ENCODE measurements at regions of chr5 and their contacts with region 1.

Region 1: GRCh38 chr5:179559284-179560252 is 9.2 kb downstream of the RUFY1 start:
- DNase-seq: peak; percentile 96 to 98
- H3K4me3 ChIP-seq: peak overlapping the region; percentile 91
- H3K27ac ChIP-seq: peak overlapping the region; percentile 78
- H3K4me1 ChIP-seq: peaks cover 9% of the 10 kb centered on the region; the same call in 1 of the 2 replicates
- H3K27me3 ChIP-seq: no peaks in the 10 kb centered on the region
- CTCF ChIP-seq: no peak

Region 2: DNA sequence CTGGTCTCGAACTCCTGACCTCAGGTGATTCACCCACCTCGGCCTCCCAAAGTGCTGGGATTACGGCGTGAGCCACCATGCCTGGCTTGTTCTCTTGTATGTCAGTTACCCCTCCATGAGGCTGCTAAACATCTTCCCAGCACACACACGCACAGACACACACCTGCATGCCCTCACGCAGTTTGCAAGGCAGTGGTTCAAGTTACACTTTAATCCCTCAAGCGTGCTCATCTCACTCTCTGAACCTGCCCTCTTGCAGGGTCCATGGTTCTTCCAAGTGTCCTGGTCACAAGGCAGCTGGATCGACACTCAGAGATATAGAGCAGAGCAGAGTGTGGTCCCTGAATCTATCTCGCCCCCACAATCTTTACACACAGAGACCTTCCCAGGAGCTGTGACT is 43.3 kb before region 1 on chr5:
- CTCF ChIA-PET with region 1: no interaction called
- POLR2A ChIA-PET with region 1: no interaction called
- intact Hi-C with region 1: loop called (anchors 2 kb)
- DNase-seq: no peak
- H3K4me3 ChIP-seq: no peak overlapping the region
- H3K27ac ChIP-seq: no peak overlapping the region
- H3K4me1 ChIP-seq: no peaks in the 10 kb centered on the region
- H3K27me3 ChIP-seq: peaks cover 39% of the 10 kb centered on the region
- CTCF ChIP-seq: no peak

Region 3: DNA sequence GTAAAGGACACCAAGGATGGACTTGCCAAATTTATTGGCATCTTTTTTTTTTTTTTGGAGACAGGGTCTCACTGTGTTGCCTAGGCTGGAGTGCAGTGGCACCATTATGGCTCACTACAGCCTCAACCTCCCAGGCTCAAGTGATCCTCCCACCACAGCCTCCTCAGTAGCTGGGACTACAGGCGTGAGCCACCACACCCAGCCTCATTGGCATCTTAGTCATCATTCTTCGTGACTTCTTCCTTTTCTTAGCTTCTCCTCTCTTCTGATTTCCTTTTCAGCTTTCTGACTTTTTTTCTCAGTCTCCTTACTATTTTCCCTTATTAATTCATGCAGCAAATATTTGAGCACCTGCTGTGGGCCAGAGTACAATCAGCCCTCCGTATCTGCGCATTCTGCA is 179.2 kb after region 1 on chr5:
- CTCF ChIA-PET with region 1: interaction called, 21 read pairs
- POLR2A ChIA-PET with region 1: no interaction called
- intact Hi-C with region 1: no loop called
- DNase-seq: no peak
- H3K4me3 ChIP-seq: no peak overlapping the region
- H3K27ac ChIP-seq: no peak overlapping the region
- H3K4me1 ChIP-seq: peaks cover 11% of the 10 kb centered on the region; the same call in 1 of the 2 replicates
- H3K27me3 ChIP-seq: no peaks in the 10 kb centered on the region
- CTCF ChIP-seq: no peak